ENCODE measurements at regions of chr9 and their contacts with region 1.

Region 1: GRCh38 chr9:70136632-70137031 is 93.0 kb downstream of the MAMDC2 start:
- DNase-seq: no peak
- ATAC-seq: no peak
- H3K4me3 Mint-ChIP-seq: no peak overlapping the region
- H3K27ac Mint-ChIP-seq: no peak overlapping the region
- H3K4me1 Mint-ChIP-seq: no peaks in the 10 kb centered on the region
- H3K27me3 Mint-ChIP-seq: peaks cover 3% of the 10 kb centered on the region

Region 2: DNA sequence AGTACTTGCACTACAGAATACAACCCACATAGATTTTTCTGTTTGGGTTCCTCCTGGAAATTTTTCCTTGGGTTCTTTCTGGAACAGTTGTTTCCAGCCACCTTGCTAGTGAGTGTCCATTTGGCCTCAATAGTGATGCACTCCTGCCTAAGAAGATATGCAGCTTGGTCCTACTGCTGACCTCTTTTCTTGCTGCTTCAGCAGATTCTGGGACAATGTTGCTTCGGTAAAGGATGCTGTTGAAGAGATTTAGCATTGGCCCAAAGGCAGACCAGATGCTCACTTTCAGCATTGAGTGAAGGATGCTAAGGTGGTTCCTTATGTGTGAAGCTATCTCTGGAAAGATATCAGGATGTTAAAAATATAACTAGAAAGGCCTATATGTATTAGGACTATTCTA is 35.9 kb after region 1 on chr9:
- CTCF ChIA-PET with region 1: no interaction called
- POLR2A ChIA-PET with region 1: no interaction called
- intact Hi-C with region 1: loop called in 1 of 2 experiments (anchors 1 kb)
- DNase-seq: no peak
- ATAC-seq: no peak
- H3K4me3 Mint-ChIP-seq: no peak overlapping the region
- H3K27ac Mint-ChIP-seq: no peak overlapping the region
- H3K4me1 Mint-ChIP-seq: no peaks in the 10 kb centered on the region
- H3K27me3 Mint-ChIP-seq: no peaks in the 10 kb centered on the region

Region 3: DNA sequence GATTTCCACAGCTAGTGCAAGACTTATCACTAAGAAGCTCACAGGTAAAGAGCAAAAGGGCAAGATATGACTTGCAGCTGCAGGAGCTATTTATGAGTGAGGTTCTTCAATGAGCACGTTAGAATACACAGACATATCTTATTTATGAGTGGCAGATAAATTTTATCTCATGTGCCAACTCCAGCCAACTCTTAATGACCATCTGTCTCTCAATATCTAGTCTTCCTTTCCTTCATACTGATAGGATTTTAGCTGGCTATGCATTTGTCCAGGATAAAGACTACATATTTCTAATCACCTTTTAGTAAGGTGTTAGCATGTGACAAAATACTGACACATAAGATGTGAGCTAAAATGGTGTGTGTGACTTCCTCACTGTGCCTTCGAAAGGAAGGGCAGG is 680.3 kb after region 1 on chr9:
- CTCF ChIA-PET with region 1: no interaction called
- POLR2A ChIA-PET with region 1: no interaction called
- intact Hi-C with region 1: no loop called
- DNase-seq: no peak
- ATAC-seq: no peak
- H3K4me3 Mint-ChIP-seq: no peak overlapping the region
- H3K27ac Mint-ChIP-seq: no peak overlapping the region
- H3K4me1 Mint-ChIP-seq: no peaks in the 10 kb centered on the region
- H3K27me3 Mint-ChIP-seq: no peaks in the 10 kb centered on the region